Activated CD8-positive, alpha-beta T cell treated with anti-CD3 and anti-CD28 coated beads for 36 hours (primary cell): ENCODE measurements at regions of chr3 and their contacts with region 1.

Region 1: DNA sequence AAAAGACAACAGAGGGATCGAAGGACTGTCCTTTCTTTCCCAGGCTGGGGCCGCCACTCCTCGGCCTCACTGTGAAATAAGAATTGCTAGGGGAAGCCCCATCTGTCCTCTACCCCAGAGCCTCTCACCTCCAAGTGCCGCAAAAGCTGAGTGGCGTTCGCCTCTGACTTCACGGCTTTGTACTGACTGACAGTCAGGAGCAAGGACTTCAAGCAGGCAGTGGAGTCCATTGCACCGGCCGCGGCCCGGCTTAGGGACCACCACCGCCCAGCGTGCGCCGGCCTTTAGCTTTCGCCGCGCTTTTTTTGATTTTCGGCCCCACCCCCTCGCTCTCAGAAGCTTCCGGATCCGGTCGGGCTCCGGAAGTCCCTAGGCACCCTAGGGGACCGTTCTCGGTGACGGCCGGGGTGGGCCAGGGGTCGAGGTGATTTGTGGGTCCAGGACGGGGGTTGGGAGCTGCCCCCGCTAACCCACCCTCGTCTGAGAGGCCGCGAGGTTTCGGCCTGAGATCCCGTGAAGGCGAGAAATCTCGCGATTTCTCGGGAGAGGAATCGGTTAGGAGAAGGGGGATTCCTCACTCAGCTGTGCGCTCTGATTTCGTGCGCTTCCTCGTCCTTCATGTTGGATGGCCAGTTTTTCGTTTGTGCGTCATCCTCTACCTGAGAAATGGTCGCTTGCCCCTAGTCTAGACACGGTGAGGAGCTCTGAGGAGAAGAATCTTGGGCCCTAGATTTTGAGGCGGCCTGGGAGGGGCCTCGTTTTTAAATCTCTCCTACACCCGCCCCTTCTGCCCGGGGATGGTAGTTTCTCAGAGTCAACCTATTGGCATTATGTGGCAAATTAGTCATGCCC is at the starts of genes CIP2A and DZIP3:
- DNase-seq: peak; percentile 94
- ATAC-seq: peak; percentile 92
- H3K4me3 Mint-ChIP-seq: peak within 1 kb of the TSS; percentile 97
- H3K27ac Mint-ChIP-seq: peak within 1 kb of the TSS; percentile 96
- H3K4me1 Mint-ChIP-seq: peaks cover 42% of the 10 kb centered on the region
- H3K27me3 Mint-ChIP-seq: no peaks in the 10 kb centered on the region
- CTCF ChIP-seq: no peak
- total RNA-seq, gene CIP2A: 42.5 to 44.9 TPM
- total RNA-seq, gene DZIP3: 18.5 to 21.8 TPM

Region 2: GRCh38 chr3:108602249-108602934 is 13.0 kb after region 1 on chr3:
- CTCF ChIA-PET with region 1: interaction called, 21 read pairs
- POLR2A ChIA-PET with region 1: interaction called, 57 read pairs
- intact Hi-C with region 1: no loop called
- DNase-seq: peak; percentile 54
- ATAC-seq: peak; percentile 79
- H3K4me3 Mint-ChIP-seq: peak overlapping the region; percentile 66
- H3K27ac Mint-ChIP-seq: peak overlapping the region; percentile 90
- H3K4me1 Mint-ChIP-seq: peaks cover 69% of the 10 kb centered on the region
- H3K27me3 Mint-ChIP-seq: no peaks in the 10 kb centered on the region
- CTCF ChIP-seq: no peak

Region 3: DNA sequence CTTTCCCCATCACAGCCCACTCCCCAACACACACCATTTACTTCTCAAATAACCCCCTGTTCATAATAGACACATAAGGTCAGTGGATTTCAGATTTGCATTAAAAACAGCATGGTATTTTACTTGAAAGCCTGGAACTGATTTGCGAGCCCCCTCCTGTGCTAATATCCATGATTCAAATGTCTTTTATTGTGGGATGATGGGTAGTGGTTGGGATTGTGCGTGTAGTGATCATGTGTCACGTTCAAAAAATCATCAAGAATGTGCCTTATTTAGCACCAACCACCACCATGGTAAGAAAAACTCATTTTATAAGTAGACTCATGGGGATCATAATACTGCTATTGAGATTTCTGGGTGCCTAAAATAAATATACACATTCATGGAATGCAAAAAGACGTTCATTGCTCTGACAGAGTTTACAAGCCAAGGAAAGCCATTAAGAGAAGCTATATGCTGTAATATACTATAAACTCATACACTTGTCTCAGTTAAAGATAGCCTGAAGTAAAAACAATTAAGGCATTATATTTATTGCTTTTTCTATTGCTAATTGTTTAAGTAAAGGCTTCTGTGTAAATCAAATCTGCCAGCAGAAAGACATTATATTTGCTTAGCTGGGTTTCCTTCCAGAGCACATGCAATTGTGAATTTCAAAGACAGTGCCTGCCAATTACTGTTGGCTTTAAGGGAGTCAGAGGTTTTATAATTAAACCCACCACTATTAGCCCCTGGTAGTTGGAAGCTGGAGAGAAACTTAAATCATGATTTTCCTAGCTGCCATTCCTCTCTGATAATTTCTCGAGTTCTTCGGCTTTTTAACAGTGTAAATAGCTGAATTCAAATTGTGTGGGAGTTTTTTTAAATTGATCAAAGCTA is 237.2 kb after region 1 on chr3:
- CTCF ChIA-PET with region 1: no interaction called
- POLR2A ChIA-PET with region 1: interaction called, 6 read pairs
- intact Hi-C with region 1: loop called (anchors 5 kb)
- DNase-seq: no peak
- ATAC-seq: no peak
- H3K4me3 Mint-ChIP-seq: peak overlapping the region; percentile 82
- H3K27ac Mint-ChIP-seq: peak overlapping the region; percentile 86
- H3K4me1 Mint-ChIP-seq: peaks cover 61% of the 10 kb centered on the region
- H3K27me3 Mint-ChIP-seq: no peaks in the 10 kb centered on the region
- CTCF ChIP-seq: no peak